ENCODE measurements at regions of chr3 and their contacts with region 1.

Region 1: DNA sequence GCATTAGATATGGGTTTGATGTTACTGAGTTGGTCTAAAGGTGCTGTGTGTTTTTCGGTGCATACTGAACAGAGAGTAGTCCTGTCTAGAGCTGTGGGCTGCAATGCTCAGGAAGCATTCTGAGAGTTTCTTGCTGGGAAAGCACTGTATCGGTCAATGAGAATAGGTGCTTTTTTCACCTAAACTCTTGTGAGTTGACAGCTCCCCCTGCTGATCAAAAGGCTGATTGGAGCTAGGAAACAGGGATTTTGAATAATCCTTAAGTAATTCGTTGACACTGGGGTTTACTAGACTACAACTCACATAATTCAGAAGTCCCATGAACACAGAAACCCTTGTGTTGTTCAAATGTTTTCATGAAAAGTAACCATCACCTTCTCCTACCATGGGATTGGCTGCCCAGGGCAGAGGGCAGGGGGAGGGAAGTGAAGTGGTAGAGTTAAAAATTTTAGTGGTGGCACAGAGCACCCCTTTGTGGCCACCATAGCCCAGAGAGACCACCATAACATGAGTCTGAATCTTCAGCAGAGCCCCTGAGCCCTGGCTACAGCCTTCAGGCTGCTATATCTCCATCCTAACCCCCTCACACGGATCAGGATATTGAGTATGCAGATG is 13.0 kb upstream of the MANF start:
- DNase-seq: peak in 1 of 2 donors; percentile 75
- H3K4me3 ChIP-seq: no peak overlapping the region
- H3K27ac ChIP-seq: no peak overlapping the region
- H3K4me1 ChIP-seq: no peaks in the 10 kb centered on the region
- H3K27me3 ChIP-seq: no peaks in the 10 kb centered on the region
- CTCF ChIP-seq: peak; percentile 47 to 81 (median 63)

Region 2: GRCh38 chr3:50648313-50648712 is 723.7 kb before region 1 on chr3:
- intact Hi-C with region 1: no loop called
- DNase-seq: no peak
- H3K4me3 ChIP-seq: no peak overlapping the region
- H3K27ac ChIP-seq: no peak overlapping the region
- H3K4me1 ChIP-seq: peaks cover 0 to 16% of the 10 kb centered on the region in 2 donors
- H3K27me3 ChIP-seq: no peaks in the 10 kb centered on the region
- CTCF ChIP-seq: no peak

Region 3: DNA sequence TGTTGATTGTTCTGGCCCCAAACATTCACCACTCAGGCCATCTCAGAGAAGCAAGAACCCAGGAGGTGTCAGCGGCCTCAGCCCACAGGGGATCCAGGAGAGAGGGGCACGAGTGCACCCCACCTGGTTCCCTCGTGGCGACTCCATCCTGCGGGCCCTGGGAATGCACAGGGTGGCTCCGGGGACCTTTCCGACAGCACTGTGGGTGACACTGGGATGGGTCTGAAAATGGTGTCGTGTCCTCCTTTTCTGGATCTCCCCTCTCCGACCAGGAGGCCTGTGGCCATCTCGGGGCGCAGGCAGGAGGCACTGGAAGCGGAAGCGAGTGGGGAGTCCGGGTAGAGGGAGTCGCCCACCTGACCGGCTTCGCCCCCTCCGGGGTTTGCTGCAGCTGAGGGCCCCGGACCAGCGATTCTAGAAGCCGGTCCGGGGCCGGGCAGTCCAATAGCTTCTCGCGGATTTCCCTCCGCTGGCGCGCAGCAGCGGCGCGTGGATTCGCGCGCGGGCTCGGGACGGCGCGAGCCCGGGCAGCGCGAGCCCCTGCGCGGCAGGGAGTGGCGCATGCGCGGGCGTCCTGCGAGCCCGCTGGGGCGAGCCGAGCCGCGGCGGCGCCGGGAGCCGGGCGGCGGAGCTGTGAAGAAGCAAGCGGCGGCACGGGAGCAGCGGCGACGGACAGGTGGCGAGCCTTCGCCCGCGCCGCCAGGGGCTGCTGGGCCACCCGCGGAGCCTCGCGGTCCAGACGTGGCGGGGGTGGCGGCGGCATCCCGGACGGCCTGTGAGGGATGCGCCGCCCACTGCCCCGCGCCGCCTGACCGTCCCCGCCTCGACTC is 697.5 kb before region 1 on chr3 and contains the start of gene DOCK3:
- intact Hi-C with region 1: loop called (anchors 10 kb)
- DNase-seq: peak in 1 of 2 donors; percentile 73
- H3K4me3 ChIP-seq: peak within 1 kb of the TSS; percentile 67
- H3K27ac ChIP-seq: no peak within 1 kb of the TSS
- H3K4me1 ChIP-seq: no peaks in the 10 kb centered on the region
- H3K27me3 ChIP-seq: no peaks in the 10 kb centered on the region
- CTCF ChIP-seq: no peak
- total RNA-seq, gene DOCK3: 3.9 TPM

Region 4: GRCh38 chr3:51099794-51100535 is 272.1 kb before region 1 on chr3:
- intact Hi-C with region 1: loop called (anchors 2 kb)
- DNase-seq: no peak
- H3K4me3 ChIP-seq: no peak overlapping the region
- H3K27ac ChIP-seq: no peak overlapping the region
- H3K4me1 ChIP-seq: no peaks in the 10 kb centered on the region
- H3K27me3 ChIP-seq: no peaks in the 10 kb centered on the region
- CTCF ChIP-seq: peak in 2 of 3 experiments; percentile 39 to 56

Region 5: GRCh38 chr3:51269466-51269865 is 102.6 kb before region 1 on chr3:
- intact Hi-C with region 1: loop called (anchors 5 kb)
- DNase-seq: no peak
- H3K4me3 ChIP-seq: no peak overlapping the region
- H3K27ac ChIP-seq: no peak overlapping the region
- H3K4me1 ChIP-seq: no peaks in the 10 kb centered on the region
- H3K27me3 ChIP-seq: no peaks in the 10 kb centered on the region
- CTCF ChIP-seq: no peak